ENCODE measurements at regions of chr1 and their contacts with region 1.

Region 1: DNA sequence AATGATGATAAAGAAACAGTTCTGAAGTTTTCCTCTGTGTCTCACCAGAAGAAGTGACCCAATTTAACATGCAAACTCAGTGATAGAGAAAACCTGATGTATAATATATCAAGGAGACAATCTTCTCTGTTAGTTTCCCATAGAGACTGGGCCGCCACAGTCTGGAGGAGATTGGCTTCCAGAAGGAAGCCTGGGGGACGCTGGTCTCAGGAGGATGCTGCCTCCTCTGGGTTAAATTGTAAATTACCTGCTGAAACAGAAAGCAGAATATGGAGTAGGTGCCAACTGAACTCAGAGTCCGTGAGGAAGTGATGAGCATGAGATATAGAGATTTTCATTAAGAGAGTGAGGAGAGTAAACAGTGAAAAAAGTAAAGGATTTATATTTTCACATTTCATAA is 15.8 kb downstream of the OR14I1 start:
- DNase-seq: peak; percentile 25
- H3K4me3 ChIP-seq: no peak overlapping the region
- H3K27ac ChIP-seq: no peak overlapping the region
- H3K4me1 ChIP-seq: no peaks in the 10 kb centered on the region
- H3K27me3 ChIP-seq: no peaks in the 10 kb centered on the region
- CTCF ChIP-seq: peak in 3 of 5 experiments; percentile 38 to 45 (median 39)
- EP300 ChIP-seq: no peak
- POLR2A ChIP-seq: no peak

Region 2: DNA sequence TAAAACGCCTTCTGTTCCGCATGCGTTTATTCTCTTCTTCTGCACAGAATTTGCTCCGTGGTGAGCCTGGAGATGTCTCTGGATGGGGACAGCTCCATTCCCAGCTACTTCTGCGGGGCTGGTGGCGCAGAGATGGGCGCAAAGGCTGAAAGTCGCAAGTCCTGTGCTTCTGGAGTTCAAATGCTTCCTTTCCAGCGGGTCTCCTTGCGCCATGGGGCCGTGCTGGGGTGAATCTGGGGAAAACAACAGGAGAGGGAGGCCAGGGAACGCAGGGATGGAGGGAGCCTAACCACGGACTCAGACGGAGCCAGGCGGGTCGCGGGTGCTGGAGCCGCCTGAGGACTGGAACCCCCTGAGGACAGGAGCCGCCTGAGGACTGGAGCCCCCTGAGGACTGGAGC is 380.7 kb before region 1 on chr1:
- in situ Hi-C with region 1: no loop called
- intact Hi-C with region 1: no loop called
- DNase-seq: no peak
- H3K4me3 ChIP-seq: no peak overlapping the region
- H3K27ac ChIP-seq: no peak overlapping the region
- H3K4me1 ChIP-seq: no peaks in the 10 kb centered on the region
- H3K27me3 ChIP-seq: no peaks in the 10 kb centered on the region
- CTCF ChIP-seq: no peak
- EP300 ChIP-seq: no peak
- POLR2A ChIP-seq: no peak

Region 3: GRCh38 chr1:248622570-248623001 is 64.2 kb before region 1 on chr1:
- in situ Hi-C with region 1: loop called in 2 of 4 experiments (anchors 10 kb)
- intact Hi-C with region 1: no loop called
- DNase-seq: no peak
- H3K4me3 ChIP-seq: no peak overlapping the region
- H3K27ac ChIP-seq: no peak overlapping the region
- H3K4me1 ChIP-seq: no peaks in the 10 kb centered on the region
- H3K27me3 ChIP-seq: no peaks in the 10 kb centered on the region
- CTCF ChIP-seq: peak; percentile 41 to 62 (median 56)
- EP300 ChIP-seq: no peak
- POLR2A ChIP-seq: no peak

Region 4: DNA sequence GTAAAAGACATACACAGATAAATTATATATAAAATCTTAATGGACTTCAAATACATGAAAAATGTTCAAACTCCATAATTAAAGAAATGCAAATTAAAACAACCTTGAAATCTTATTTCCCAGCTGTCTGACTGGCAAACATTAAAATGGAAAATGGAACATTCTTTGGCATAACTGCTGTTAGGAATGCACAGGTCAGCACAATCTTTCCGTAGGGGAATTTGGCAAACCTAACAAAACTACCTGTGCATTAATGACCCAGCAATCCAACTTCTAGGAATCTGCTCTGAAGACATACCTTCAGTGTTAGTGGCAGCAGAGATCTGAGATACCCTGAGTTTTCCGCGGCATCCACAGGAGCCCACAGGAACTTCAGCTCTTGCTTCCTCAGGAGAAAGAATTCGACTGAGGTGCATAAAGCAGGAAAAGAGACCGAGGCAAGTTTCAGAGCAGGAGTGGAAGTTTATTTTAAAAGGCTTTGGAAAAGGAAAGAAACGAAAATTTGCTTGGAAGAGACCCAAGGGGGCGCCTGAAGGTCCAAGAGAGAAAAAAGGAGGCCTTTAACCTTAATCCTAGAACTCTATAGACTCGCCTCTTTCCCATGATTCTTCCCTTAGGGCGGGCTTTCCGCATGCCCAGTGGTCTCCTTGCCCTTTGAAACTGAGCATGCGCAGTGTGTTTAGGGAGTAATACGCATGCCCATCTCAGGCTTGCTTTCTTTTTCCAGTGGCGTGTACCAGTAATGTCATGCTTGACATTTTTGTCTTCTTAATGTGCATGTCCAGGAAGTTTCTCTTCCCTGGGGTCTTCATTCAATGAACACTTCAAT is 43.9 kb after region 1 on chr1:
- in situ Hi-C with region 1: no loop called
- intact Hi-C with region 1: no loop called
- DNase-seq: no peak
- H3K4me3 ChIP-seq: no peak overlapping the region
- H3K27ac ChIP-seq: no peak overlapping the region
- H3K4me1 ChIP-seq: no peaks in the 10 kb centered on the region
- H3K27me3 ChIP-seq: no peaks in the 10 kb centered on the region
- CTCF ChIP-seq: no peak
- EP300 ChIP-seq: no peak
- POLR2A ChIP-seq: no peak